ENCODE measurements at regions of chr2 and their contacts with region 1.

Region 1: DNA sequence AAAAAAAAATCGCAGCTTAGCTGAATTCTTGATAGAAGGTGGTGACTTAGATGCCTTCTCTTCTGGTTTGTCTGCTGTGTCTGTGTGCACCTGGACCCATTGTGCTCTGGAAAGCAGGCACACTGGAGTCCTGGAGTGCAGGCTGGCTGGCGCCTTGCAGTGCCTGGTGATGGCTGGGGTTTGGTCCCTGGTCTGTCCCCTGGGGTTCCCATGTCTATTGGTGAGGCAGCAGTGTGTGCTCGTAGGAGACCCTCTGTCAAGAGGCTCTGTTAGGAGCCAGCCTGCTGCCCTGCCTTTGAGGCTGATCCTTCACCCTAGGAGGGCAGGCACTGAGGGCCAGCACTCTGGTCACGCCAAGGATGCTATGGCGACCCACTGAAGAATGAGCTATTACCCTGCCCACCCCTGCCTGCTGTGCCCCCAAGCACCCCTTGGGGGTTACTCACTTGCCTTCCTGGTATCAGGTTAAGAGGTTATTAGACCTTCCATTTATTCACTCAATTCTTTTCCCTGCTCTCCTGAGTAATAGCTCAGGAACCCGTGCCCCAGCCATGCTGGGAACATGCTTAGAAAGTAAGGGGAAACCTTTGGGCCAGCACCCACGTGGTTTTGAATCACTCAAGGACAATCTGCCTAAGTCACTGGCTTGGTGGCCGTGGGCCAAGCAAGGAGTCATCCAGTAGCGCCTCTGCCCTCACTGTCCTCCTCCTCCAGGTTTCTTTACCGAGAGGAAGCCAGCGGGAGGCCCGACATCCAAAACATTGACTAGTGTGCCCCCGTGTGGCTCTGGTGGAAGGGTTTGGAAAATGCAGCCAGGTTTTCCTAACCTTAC is 284.5 kb downstream of the PRKCE start:
- H3K4me3 ChIP-seq: no peak overlapping the region
- H3K27ac ChIP-seq: no peak overlapping the region
- H3K4me1 ChIP-seq: peaks cover 20% of the 10 kb centered on the region
- CTCF ChIP-seq: peak; percentile 69; the same call in 1 of the 2 replicates

Region 2: DNA sequence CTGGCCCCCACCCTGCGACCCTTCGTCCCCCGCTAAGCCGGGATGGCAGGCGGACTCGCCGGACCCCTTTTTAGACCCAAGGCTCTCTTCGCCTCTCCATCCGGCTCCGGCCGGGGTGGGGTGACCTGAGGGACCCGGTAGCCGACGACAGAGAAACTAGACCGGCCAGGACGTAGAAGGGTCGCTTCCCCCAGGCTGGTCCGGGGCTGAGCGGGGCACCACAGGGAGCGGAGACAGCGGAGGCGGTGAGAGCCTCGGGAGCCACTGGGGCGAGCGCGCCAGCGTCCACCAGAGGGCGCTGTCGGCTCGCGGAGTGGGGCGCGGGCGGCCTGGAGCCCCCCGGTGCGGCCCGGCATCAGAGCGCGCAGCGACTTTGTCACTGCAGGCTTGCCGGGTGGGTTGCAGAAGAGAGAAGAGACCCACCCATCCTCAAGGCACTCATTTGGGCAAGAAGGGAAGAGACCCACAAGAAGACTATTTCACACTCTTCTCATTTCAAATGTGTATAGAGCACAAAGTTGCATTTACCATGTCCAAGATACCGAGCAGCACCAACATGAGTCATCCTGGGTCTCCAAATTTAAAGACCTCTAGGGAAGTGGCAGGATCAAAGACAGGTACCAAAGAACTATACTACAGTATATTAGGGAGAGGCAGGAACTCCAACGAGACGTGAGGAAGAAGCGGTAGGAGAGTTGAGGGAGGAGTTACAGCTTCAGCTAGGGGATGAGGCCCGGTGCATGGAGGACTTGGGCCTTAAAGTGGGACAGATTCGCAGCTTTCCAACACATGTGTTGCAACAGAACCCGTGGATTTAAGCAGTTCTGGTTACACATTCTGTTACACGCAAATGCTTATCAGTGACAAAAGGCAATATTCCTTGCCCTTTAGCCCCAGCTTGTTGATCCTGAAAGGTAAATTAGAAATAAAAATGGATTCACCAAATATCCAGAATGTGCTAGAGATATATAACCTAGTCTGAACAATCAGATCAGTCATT is 292.2 kb before region 1 on chr2:
- CTCF ChIA-PET with region 1: interaction called, 15 read pairs
- POLR2A ChIA-PET with region 1: no interaction called
- H3K4me3 ChIP-seq: peak overlapping the region; percentile 47
- H3K27ac ChIP-seq: peak overlapping the region; percentile 49; the same call in 1 of the 2 replicates
- H3K4me1 ChIP-seq: peaks cover 3% of the 10 kb centered on the region; the same call in 1 of the 2 replicates
- CTCF ChIP-seq: peak; percentile 84

Region 3: GRCh38 chr2:45650851-45651414 is 285.1 kb before region 1 on chr2:
- CTCF ChIA-PET with region 1: interaction called, 15 read pairs
- POLR2A ChIA-PET with region 1: no interaction called
- H3K4me3 ChIP-seq: peak overlapping the region; percentile 75
- H3K27ac ChIP-seq: peak overlapping the region; percentile 96
- H3K4me1 ChIP-seq: peaks cover 23% of the 10 kb centered on the region
- CTCF ChIP-seq: peak; percentile 99

Measured in HEK293 (cell line).